ENCODE measurements at regions of chr20 and their contacts with region 1.

Region 1: GRCh38 chr20:41308290-41308711 is 9.2 kb downstream of the ZHX3 start:
- DNase-seq: no peak
- ATAC-seq: no peak
- H3K4me3 Mint-ChIP-seq: no peak overlapping the region
- H3K27ac Mint-ChIP-seq: no peak overlapping the region
- H3K4me1 Mint-ChIP-seq: peaks cover 28% of the 10 kb centered on the region
- H3K27me3 Mint-ChIP-seq: no peaks in the 10 kb centered on the region
- CTCF ChIP-seq: no peak

Region 2: DNA sequence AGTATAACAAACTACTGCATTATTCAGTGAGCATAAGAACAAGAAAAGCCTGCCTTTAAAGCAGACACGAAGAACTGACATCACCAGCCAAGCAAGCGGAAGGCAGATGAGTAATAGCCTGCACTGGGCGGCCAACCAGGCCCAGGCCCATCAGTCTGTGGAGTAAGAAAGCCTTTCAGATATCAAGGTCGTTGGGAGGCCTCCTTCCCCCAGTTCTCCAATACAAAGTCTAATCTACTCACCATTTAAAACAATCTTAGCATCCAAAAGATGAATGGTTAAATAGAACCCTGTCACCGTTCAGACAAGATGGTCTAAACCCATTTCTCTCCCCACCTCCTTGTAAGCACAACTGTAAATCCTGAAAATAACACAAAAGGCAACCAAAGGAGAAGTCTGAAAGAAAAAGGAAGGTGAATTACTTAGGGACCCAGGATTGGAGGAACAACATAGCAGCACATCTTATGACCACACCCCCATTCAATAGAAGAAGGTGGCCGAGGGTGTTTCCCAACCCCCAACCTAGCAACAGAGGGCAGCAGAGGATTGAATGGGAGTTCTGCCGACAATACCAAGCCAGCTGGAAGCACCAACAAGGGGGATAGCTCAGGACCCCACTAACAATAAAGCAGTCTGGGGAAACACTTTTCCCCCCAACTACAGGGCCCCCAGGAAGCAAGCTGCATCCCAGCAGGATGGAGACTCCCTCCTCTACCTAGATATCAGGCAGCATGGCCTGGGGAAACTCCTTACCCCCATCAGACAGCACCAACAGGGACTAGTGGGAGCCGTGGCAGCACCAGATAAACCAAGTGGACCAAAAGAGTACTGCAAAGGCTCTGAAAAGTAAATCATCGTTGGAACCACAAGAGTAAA is 58.7 kb before region 1 on chr20:
- CTCF ChIA-PET with region 1: no interaction called
- POLR2A ChIA-PET with region 1: interaction called, 6 read pairs
- intact Hi-C with region 1: loop called (anchors 1 kb)
- DNase-seq: no peak
- ATAC-seq: peak; percentile 86
- H3K4me3 Mint-ChIP-seq: peak overlapping the region; percentile 56
- H3K27ac Mint-ChIP-seq: peak overlapping the region; percentile 84
- H3K4me1 Mint-ChIP-seq: peaks cover 62% of the 10 kb centered on the region
- H3K27me3 Mint-ChIP-seq: no peaks in the 10 kb centered on the region
- CTCF ChIP-seq: no peak

Region 3: GRCh38 chr20:41848201-41848600 is 539.9 kb after region 1 on chr20:
- CTCF ChIA-PET with region 1: no interaction called
- POLR2A ChIA-PET with region 1: no interaction called
- intact Hi-C with region 1: no loop called
- DNase-seq: no peak
- ATAC-seq: no peak
- H3K4me3 Mint-ChIP-seq: no peak overlapping the region
- H3K27ac Mint-ChIP-seq: no peak overlapping the region
- H3K4me1 Mint-ChIP-seq: no peaks in the 10 kb centered on the region
- H3K27me3 Mint-ChIP-seq: peaks cover 5% of the 10 kb centered on the region
- CTCF ChIP-seq: no peak

Region 4: DNA sequence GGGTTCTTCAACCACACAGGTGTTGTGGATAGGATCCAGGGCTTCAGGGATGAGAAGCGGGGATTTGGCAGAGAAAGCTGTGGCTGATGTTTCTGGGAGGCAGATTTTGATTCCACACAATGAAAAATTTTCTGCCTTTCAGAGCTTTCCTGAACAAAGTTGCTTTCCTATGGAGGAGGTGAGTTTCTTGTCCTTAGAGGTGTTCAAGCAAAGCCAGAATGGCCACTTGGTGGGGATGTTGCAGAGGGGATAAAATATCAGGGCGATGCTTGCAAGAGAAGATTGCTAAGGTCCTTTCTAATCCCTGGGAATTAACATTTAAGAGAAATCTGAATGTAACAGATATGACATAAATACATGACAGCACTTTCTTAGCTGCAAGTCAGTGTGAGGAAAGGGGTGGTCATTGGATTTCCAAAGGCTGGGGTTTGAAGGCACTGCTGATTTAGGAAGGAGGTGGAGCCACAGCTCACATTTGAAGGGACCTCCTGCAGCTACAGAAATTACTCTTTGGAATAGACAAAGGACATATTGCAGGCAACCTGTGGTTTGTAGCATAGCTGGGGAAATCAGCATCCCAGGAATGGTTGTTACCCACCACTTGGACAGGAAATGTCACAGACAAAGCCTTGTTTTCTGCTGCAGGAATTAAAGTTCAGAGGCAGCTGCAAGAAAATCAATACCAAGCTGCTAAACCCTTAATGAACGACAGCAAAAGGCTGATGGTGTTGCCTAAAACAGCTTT is 581.0 kb after region 1 on chr20:
- CTCF ChIA-PET with region 1: no interaction called
- POLR2A ChIA-PET with region 1: no interaction called
- intact Hi-C with region 1: no loop called
- DNase-seq: no peak
- ATAC-seq: no peak
- H3K4me3 Mint-ChIP-seq: no peak overlapping the region
- H3K27ac Mint-ChIP-seq: no peak overlapping the region
- H3K4me1 Mint-ChIP-seq: no peaks in the 10 kb centered on the region
- H3K27me3 Mint-ChIP-seq: peaks cover 2% of the 10 kb centered on the region
- CTCF ChIP-seq: no peak